ENCODE measurements at regions of chr6 and their contacts with region 1.

Region 1: DNA sequence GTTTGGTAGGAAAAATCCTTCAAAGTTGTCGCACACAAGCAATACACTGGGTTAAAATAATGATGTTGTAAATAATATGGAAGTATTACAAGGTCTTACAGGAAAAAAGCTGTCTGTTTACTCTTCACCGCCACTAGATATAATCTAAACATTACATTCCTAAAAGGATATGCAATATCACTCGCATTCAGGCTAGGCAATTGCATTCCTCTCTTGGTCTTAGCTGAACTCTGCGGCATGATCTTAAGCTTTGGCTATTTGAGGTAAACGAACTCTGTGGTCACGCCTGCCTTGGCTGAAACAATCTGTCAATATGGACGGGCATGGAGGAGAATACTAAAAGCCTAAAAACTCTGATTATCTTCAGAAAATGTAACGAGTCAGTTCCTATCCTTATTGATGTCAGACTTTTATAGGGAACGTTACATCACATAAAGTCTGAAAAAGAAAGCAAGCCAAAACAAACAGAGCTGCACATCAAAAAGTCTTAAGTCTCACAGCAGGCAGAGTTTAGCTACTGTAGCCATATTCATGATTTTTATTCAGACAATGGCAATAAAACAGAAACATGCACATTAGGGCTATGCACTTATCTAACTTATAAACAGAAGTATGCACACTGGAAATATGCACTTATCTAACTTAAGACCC is 30.8 kb upstream of the FILIP1 start:
- DNase-seq: peak; percentile 93

Region 2: DNA sequence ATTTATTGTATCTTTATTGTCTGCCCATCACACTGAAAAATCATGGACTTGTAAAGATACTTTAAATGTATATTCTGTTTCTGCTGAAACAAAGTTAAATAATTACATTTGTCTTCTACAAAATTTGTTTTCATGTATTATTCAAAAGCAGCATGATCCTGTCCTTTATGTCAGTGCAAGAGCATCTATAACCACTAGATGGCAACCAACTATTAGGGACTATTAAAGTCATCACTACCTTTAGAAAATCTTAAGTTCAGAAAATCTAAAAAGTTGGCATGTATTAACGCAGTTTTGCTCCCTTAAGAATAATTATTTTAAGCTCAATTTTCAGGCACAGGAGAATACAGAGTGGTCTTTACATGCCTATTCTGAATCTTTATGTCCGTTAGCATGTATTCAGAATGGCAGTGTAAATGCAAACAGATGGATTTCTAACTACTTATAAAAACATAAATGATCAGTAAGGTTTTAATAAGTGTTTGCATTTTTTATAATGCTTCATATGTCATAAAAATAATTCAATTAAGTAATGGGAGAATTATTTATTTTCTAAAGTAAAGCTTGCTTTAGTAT is 257.6 kb before region 1 on chr6:
- in situ Hi-C with region 1: loop called (anchors 25 kb)
- DNase-seq: no peak